ENCODE measurements at regions of chr17 and their contacts with region 1.

Region 1: DNA sequence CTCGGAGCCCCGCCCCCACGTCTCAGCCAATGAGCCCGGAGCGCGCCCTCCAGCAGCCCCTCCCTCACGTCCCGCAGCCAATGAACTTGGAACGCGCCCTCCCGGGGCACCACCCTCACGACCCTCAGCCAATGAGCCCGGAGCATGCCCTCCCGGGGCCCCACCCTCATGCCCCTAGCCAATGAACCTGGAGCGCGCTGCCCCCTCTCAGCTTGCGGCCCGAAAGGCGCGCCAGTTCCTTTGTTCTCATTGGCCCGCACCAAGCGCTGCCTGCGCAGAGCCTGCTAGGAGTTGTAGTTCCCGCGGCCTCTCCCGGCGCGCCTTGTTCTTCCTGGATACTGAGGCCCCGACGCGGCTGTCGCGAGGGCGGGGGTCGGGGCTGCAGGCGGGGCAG is at the start of gene LRRC45:
- DNase-seq: peak; percentile 100
- H3K4me3 ChIP-seq: peak within 1 kb of the TSS; percentile 37 to 81 (median 46)
- H3K27ac ChIP-seq: peak within 1 kb of the TSS in 2 of 5 donors; percentile 34 to 86
- H3K4me1 ChIP-seq: peaks cover 21 to 27% of the 10 kb centered on the region in 2 donors
- H3K27me3 ChIP-seq: no peaks in the 10 kb centered on the region
- CTCF ChIP-seq: no peak
- POLR2A ChIP-seq: no peak
- total RNA-seq, gene LRRC45: 3.0 to 24.2 (median 11.0) TPM

Region 2: DNA sequence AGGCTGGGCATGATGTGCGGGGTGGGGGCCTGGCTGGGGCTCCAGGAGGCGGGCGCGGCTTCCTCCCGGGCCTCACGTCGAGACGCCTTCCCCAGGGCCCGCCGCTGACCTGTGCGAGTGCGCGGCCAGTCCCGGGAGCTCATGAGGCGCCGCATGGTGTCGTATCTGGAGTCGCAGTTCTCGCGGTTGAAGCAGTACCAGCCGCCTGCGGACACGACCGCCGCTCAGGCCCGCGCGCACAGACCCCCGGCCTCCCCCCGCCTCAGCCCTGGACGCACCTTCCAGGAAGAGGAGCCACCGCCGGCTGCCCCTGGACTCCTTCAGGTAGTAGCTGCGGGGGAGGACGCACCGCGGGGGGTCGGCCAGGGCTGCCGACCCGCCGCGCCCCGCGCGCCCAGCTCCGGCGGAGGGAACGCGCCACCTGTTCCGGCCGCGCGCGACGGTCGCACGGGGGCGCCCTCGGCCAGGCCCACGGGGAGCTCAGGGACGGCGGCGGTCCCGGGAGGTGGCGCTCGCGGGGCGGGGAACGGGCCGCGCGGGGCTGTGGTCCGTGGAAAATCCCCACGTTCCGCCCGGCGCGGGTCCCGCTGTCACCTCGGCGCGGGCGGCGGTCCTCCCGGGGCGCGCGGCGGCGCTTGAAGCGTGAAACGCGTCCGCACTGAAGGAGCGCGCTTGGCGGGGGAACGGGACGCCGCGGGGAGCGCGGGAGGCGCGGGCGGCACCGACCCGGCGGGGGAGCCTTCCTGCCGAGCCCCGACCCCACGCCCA is 63.4 kb before region 1 on chr17:
- intact Hi-C with region 1: loop called (anchors 2 kb)
- DNase-seq: peak; percentile 47 to 80 (median 70)
- H3K4me3 ChIP-seq: peak overlapping the region in 1 of 4 donors; percentile 61
- H3K27ac ChIP-seq: no peak overlapping the region
- H3K4me1 ChIP-seq: peaks cover 9 to 11% of the 10 kb centered on the region in 2 donors
- H3K27me3 ChIP-seq: peaks cover 35% of the 10 kb centered on the region
- CTCF ChIP-seq: peak in 3 of 6 experiments; percentile 87 to 99 (median 97)
- POLR2A ChIP-seq: no peak

Region 3: GRCh38 chr17:81991684-81992305 is 31.2 kb before region 1 on chr17:
- intact Hi-C with region 1: no loop called
- DNase-seq: peak; percentile 67 to 93 (median 91)
- H3K4me3 ChIP-seq: no peak overlapping the region
- H3K27ac ChIP-seq: peak overlapping the region in 4 of 5 donors; percentile 5 to 83 (median 61)
- H3K4me1 ChIP-seq: peaks cover 8 to 19% of the 10 kb centered on the region in 2 donors
- H3K27me3 ChIP-seq: no peaks in the 10 kb centered on the region
- CTCF ChIP-seq: no peak
- POLR2A ChIP-seq: peak in 1 of 2 donors; percentile 52

Region 4: GRCh38 chr17:82292251-82293154 is 269.5 kb after region 1 on chr17:
- intact Hi-C with region 1: loop called in 1 of 2 experiments (anchors 10 kb)
- DNase-seq: peak; percentile 94 to 99 (median 98)
- H3K4me3 ChIP-seq: peak overlapping the region; percentile 42 to 96 (median 66)
- H3K27ac ChIP-seq: peak overlapping the region; percentile 92 to 99 (median 93)
- H3K4me1 ChIP-seq: peaks cover 0 to 30% of the 10 kb centered on the region in 2 donors
- H3K27me3 ChIP-seq: no peaks in the 10 kb centered on the region
- CTCF ChIP-seq: no peak
- POLR2A ChIP-seq: peak; percentile 82 to 96

Measured in adrenal gland (tissue), 19 donors.